ENCODE measurements at regions of chr19 and their contacts with region 1.

Region 1: DNA sequence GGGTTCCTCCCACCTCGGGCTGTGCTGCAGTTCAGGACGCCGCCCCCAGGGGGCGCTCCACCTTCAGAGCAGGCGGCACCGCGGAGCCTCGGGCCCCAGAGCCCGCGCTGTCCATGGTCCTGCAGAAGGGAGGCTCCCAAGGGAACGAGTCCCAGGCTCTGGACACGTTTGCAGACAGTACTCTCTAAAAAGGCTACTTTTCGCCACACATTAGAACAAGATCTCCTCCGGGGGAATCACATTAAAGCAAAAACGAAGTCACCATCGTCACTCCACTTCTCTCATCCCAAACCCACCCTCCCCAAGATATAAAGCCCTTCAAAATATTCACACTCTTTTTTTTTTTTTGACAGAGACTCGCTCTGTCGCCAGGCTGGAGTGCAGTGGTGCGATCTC is 4.6 kb upstream of the SIGLEC10 start:
- H3K4me3 Mint-ChIP-seq: no peak overlapping the region
- H3K27ac Mint-ChIP-seq: no peak overlapping the region
- H3K4me1 Mint-ChIP-seq: peaks cover 56% of the 10 kb centered on the region
- H3K27me3 Mint-ChIP-seq: peaks cover 16% of the 10 kb centered on the region

Region 2: GRCh38 chr19:51338563-51339312 is 83.3 kb before region 1 on chr19:
- intact Hi-C with region 1: no loop called
- H3K4me3 Mint-ChIP-seq: peak overlapping the region; percentile 89
- H3K27ac Mint-ChIP-seq: peak overlapping the region; percentile 88
- H3K4me1 Mint-ChIP-seq: peaks cover 38% of the 10 kb centered on the region
- H3K27me3 Mint-ChIP-seq: peaks cover 29% of the 10 kb centered on the region

Region 3: DNA sequence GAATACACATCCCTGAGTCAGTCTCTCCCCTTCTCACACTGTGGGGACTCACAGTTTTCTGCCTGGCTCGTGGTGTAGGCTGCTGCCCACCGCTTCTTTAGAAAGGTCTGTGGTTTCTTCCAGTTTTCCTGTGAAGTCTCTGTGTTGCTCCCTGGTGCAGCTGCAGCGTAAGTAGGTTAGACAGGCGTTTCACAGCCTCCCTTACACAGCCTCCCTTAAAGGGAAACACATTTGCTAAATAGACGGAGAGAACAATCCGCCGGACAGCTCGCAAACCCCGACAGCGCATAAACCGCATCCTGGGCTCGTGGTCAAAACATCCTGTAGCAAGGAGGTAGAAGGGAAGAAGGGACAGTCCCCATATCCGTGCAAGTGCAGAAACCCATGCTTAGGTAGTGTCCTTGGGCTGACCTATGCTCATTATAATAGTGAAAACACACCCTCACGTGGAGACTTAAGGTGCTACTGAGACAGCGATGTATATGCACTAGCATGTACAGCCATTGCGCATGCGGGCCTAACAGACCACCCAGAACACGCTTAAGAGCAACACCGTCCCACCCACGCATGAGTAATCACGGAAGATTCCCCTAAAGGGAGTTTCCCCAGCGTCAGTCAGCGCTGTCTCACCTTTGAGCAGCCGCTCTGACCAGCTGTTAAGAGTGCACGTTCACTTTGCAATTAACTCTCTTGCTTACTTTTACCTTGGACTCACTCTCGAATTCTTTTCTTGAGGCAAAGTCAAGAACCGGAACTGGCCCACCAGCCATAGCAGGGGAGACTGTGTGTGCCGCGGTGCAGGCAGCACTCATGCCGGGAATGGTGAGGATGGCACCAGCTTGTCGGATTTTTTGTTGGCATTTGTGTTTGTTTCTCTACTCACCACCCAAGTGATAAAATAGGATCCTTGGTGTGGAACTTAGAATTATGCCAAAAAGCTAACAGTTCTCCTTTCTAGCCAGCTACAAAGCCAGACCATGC is 19.6 kb after region 1 on chr19:
- intact Hi-C with region 1: loop called (anchors 2 kb)
- H3K4me3 Mint-ChIP-seq: peak overlapping the region; percentile 69
- H3K27ac Mint-ChIP-seq: peak overlapping the region; percentile 79
- H3K4me1 Mint-ChIP-seq: peaks cover 44% of the 10 kb centered on the region
- H3K27me3 Mint-ChIP-seq: peaks cover 36% of the 10 kb centered on the region

Region 4: DNA sequence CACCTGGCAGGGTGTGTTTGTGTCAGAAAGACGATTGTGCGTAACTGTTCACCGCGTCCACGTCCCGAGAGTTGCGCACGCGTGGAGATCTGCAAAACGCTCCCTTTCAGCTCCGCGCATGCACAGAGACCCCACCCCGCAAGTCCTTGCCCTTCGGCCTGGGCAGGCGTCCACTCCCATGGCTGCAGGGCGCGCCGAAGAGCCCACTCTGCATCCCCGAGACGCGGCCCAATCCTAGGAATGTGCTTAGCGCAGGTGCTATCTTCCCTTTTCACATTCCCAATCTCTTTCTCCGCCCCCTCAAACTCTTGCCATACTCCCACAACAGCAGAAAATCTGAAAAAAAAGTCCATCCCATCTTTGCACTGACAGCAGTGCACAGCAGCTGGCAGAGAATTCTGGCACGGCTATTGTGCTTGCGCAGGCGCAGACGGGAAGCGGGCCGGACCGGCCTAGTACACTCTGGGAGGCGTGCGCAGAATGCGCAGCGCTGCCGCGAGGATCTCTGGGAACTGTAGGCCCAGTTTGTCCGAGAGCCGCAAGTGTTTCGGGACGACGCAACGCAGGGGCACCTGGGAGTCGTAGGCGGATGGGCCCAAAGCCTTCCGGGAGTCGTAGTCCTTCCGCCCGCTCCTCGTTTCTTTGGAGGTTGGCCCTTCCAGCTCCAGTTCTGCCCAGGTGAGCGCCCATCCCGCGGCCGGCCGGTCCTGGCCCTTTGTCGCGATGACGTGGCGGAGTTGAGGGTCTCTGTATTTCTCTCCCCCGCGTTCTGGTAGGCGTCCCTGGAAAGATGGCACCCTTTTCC is 172.1 kb after region 1 on chr19:
- intact Hi-C with region 1: no loop called
- H3K4me3 Mint-ChIP-seq: peak overlapping the region; percentile 94
- H3K27ac Mint-ChIP-seq: peak overlapping the region; percentile 87
- H3K4me1 Mint-ChIP-seq: peaks cover 33% of the 10 kb centered on the region
- H3K27me3 Mint-ChIP-seq: peaks cover 13% of the 10 kb centered on the region

Region 5: GRCh38 chr19:51651216-51651846 is 229.3 kb after region 1 on chr19:
- intact Hi-C with region 1: loop called (anchors 5 kb)
- H3K4me3 Mint-ChIP-seq: peak overlapping the region; percentile 37
- H3K27ac Mint-ChIP-seq: peak overlapping the region; percentile 76
- H3K4me1 Mint-ChIP-seq: peaks cover 77% of the 10 kb centered on the region
- H3K27me3 Mint-ChIP-seq: peaks cover 8% of the 10 kb centered on the region